ENCODE measurements at regions of chr10 and their contacts with region 1.

Region 1: GRCh38 chr10:103512196-103512990 is 18.9 kb downstream of the NEURL1 start:
- DNase-seq: no peak
- H3K4me3 ChIP-seq: no peak overlapping the region
- H3K27ac ChIP-seq: no peak overlapping the region
- H3K4me1 ChIP-seq: no peaks in the 10 kb centered on the region
- H3K27me3 ChIP-seq: no peaks in the 10 kb centered on the region
- CTCF ChIP-seq: no peak

Region 2: DNA sequence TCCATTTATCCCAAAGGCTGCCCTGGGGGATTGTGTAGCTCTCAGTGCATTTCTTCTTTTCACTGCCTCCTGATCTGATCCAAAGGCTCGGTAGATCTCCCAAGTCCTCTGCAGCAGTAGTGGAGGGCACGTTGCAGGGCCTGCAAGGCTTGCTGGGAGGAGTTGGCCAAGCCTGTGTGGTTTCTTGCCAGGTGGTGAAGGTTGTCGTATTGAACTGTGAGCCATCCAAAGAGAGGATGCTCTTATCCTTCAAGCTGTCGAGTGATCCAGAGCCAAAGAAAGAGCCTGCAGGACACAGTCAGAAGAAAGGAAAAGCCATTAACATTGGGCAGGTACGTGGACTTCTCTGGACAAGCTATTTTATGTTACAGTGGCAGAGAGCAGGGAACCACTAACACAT is 94.8 kb before region 1 on chr10:
- CTCF ChIA-PET with region 1: no interaction called
- dilution Hi-C with region 1: no loop called
- in situ Hi-C with region 1: no loop called
- intact Hi-C with region 1: no loop called
- DNase-seq: no peak
- H3K4me3 ChIP-seq: no peak overlapping the region
- H3K27ac ChIP-seq: no peak overlapping the region
- H3K4me1 ChIP-seq: no peaks in the 10 kb centered on the region
- H3K27me3 ChIP-seq: no peaks in the 10 kb centered on the region
- CTCF ChIP-seq: no peak

Region 3: GRCh38 chr10:103467406-103467805 is 45.0 kb before region 1 on chr10:
- CTCF ChIA-PET with region 1: no interaction called
- dilution Hi-C with region 1: no loop called
- in situ Hi-C with region 1: no loop called
- intact Hi-C with region 1: no loop called
- DNase-seq: no peak
- H3K4me3 ChIP-seq: no peak overlapping the region
- H3K27ac ChIP-seq: no peak overlapping the region
- H3K4me1 ChIP-seq: peaks cover 6% of the 10 kb centered on the region
- H3K27me3 ChIP-seq: peaks cover 3% of the 10 kb centered on the region
- CTCF ChIP-seq: no peak

Region 4: DNA sequence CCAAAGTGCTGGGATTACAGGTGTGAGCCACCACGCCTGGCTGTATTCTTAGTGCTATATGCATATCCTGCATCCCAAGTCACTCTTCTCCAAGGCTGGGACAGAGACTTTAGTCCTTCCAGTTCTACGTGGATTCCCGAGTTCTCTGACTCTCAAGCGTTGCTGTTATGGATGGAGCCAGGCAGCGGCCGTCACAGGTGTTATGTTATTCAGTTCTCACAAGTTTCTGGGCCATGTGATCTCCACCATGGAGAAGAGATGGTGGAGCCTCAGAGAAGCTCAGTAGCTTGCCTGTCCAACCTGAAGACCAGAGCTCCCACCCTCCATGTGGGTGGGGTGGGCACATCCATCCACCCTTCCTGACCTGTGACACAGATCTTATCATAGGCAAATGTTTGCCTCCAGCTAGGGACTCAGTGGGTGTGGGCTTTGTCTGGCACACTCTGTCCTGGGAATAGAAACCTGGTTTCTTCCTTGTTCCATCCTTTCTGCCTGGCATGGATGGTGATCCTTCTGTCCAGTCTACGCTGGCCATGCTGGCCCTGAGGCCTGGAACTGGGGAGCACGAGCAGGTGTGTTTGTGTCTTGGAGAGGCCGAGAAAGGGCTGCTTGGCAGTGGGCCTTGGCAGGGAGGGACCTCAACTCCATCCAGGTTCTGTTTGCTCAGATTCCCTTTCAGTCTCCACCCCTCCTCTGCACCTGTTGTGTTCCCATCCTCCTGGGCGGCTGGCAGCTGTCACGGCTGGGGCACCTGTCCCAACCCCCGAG is 36.4 kb after region 1 on chr10:
- CTCF ChIA-PET with region 1: no interaction called
- dilution Hi-C with region 1: loop called (anchors 5 kb)
- in situ Hi-C with region 1: no loop called
- intact Hi-C with region 1: no loop called
- DNase-seq: no peak
- H3K4me3 ChIP-seq: no peak overlapping the region
- H3K27ac ChIP-seq: no peak overlapping the region
- H3K4me1 ChIP-seq: no peaks in the 10 kb centered on the region
- H3K27me3 ChIP-seq: no peaks in the 10 kb centered on the region
- CTCF ChIP-seq: no peak

Region 5: GRCh38 chr10:103578782-103579382 is 66.5 kb after region 1 on chr10:
- CTCF ChIA-PET with region 1: no interaction called
- dilution Hi-C with region 1: loop called (anchors 5 kb)
- in situ Hi-C with region 1: no loop called
- intact Hi-C with region 1: no loop called
- DNase-seq: no peak
- H3K4me3 ChIP-seq: no peak overlapping the region
- H3K27ac ChIP-seq: no peak overlapping the region
- H3K4me1 ChIP-seq: no peaks in the 10 kb centered on the region
- H3K27me3 ChIP-seq: no peaks in the 10 kb centered on the region
- CTCF ChIP-seq: no peak

Measured in mammary epithelial cell (primary cell).